Endothelial cell of umbilical vein (primary cell): ENCODE measurements at regions of chr14 and their contacts with region 1.

Region 1: DNA sequence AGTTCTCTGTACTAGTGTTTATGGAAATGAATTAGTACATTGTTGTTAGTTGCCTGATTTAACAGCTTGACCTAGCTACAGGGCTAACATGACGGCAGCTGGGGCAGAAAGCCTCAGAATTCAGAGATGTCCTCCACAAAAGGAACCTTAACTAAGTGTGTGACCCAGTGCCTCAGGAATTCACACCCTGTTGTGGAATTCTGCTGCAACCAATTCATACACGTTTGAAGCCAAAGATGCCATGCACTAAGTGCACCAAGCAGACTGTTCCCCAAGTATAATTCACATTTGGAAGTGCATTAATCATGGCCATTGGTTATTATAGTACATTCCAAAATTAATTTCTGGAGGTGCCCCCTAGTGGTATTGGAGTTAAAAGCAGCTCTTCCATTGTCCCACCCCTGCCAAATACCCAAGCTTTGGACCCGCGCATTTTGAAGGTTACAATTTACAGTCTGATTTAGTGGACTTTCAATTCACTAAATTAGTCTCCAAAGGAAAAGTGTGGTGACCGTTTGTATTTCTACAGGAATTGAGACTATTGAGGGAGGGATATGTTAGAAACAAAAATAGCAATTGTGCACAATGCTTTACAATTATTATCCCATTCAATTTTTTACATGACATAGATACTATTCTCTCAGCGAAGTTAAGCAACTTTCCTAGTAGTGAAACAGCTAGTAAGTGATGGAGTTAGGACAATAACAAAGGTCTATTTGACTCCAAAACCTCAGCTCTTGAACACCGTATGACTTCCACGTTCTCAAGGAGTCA is 85.9 kb downstream of the PAX9 start:
- DNase-seq: peak; percentile 14
- H3K4me3 ChIP-seq: no peak overlapping the region
- H3K27ac ChIP-seq: no peak overlapping the region
- H3K4me1 ChIP-seq: no peaks in the 10 kb centered on the region
- H3K27me3 ChIP-seq: peaks cover 0 to 7% of the 10 kb centered on the region in 2 experiments
- CTCF ChIP-seq: peak; percentile 52 to 54
- POLR2A ChIP-seq: no peak

Region 2: DNA sequence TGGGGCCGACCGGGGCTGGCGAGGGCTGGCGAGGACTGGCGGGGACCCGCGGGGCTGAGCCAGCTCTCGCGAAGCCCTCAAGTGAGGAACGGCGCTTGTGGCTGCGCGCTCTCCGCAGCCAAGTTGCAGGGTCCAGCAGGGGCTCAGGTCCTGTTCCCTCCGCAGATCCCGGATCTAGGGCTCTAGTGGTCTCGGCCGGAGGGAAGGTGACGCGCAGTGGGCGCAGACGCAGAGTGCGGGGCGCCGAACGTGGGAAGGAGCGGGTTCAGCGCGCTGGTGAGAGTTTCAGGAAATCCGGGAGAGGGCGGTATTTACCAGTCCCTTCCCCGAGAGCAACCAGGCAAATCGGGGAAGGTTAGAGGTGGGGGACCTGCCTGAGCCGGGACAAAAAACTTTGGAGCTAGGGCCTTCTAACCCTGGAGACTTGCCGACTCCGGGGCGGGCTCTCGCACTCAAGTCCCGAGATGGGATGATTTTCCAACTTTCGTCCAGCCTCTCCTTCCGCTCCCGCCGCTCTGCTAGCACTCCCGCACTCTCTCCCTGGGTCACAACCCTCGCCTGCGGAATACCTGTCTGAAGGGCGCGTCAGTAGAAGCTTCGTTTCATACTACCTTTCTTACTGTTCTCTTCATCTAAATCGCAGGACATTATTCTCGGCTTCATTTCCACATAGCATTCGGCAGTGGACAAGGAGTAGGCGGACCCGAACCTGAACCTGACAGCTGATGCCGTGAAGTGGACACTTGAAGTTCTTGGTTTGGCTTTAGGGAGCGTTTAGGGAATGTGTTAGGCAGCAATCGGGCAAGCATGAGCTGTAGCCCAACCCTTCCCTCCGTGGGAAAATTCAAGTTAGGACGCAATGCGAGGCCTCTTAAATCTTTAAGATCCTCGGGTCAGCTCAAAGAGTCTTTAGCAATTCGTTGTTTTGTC is 99.5 kb before region 1 on chr14:
- CTCF ChIA-PET with region 1: interaction called, 9 read pairs
- POLR2A ChIA-PET with region 1: no interaction called
- dilution Hi-C with region 1: no loop called
- intact Hi-C with region 1: loop called (anchors 1 kb)
- DNase-seq: peak; percentile 40
- H3K4me3 ChIP-seq: peak overlapping the region in 2 of 3 experiments; percentile 31 to 35
- H3K27ac ChIP-seq: no peak overlapping the region
- H3K4me1 ChIP-seq: peaks cover 10% of the 10 kb centered on the region
- H3K27me3 ChIP-seq: peaks cover 59 to 91% of the 10 kb centered on the region in 2 experiments
- CTCF ChIP-seq: peak; percentile 42 to 47
- POLR2A ChIP-seq: no peak